K562 (cell line): ENCODE measurements at regions of chr10 and their contacts with region 1.

Region 1: DNA sequence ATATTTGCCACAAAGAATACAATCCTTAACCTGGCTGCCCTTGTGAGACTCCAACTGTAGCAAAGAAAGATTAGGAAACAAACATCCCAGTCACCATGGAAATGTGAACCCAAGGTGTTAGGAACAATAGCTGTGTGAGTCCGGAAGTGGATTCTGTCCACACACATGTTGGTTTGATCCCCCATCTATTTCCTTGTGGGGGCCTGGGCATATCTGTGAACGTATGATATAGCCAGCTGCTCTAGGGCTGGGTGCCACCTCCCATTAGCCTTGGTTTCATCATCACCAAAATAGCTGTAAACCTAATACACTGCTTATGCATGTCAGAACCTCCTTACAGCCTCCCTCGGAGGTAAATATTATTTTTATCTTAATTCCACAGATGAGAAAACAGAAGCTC is 26.4 kb downstream of the GRK5 start:
- DNase-seq: no peak
- ATAC-seq: no peak
- H3K4me3 ChIP-seq: no peak overlapping the region
- H3K27ac ChIP-seq: no peak overlapping the region
- H3K4me1 ChIP-seq: no peaks in the 10 kb centered on the region; a peak in 1 of 5 replicates
- H3K27me3 ChIP-seq: no peaks in the 10 kb centered on the region
- CTCF ChIP-seq: no peak
- EP300 ChIP-seq: no peak
- POLR2A ChIP-seq: no peak
- RAD21 ChIP-seq: no peak

Region 2: GRCh38 chr10:119217991-119218490 is 15.8 kb before region 1 on chr10:
- CTCF ChIA-PET with region 1: no interaction called
- POLR2A ChIA-PET with region 1: no interaction called
- in situ Hi-C with region 1: no loop called
- intact Hi-C with region 1: no loop called
- DNase-seq: no peak
- ATAC-seq: no peak
- H3K4me3 ChIP-seq: no peak overlapping the region
- H3K27ac ChIP-seq: no peak overlapping the region
- H3K4me1 ChIP-seq: no peaks in the 10 kb centered on the region; a peak in 1 of 5 replicates
- H3K27me3 ChIP-seq: no peaks in the 10 kb centered on the region
- CTCF ChIP-seq: no peak
- EP300 ChIP-seq: no peak
- POLR2A ChIP-seq: no peak
- RAD21 ChIP-seq: no peak

Region 3: GRCh38 chr10:119250641-119251314 is 17.0 kb after region 1 on chr10:
- CTCF ChIA-PET with region 1: no interaction called
- POLR2A ChIA-PET with region 1: interaction called, 3 read pairs
- in situ Hi-C with region 1: no loop called
- intact Hi-C with region 1: loop called (anchors 1 kb)
- DNase-seq: peak in 2 of 4 experiments; percentile 47 to 64
- ATAC-seq: peak; percentile 78
- H3K4me3 ChIP-seq: no peak overlapping the region
- H3K27ac ChIP-seq: peak overlapping the region; percentile 84
- H3K4me1 ChIP-seq: peaks cover 19 to 57% of the 10 kb centered on the region in 2 experiments
- H3K27me3 ChIP-seq: no peaks in the 10 kb centered on the region
- CTCF ChIP-seq: no peak
- EP300 ChIP-seq: peak; percentile 75
- POLR2A ChIP-seq: no peak
- RAD21 ChIP-seq: no peak